Activated T-helper 2 cell treated with anti-CD3 and anti-CD28 coated beads, Interferon-gamma antibody, Interleukin-2, Interleukin-4, amounts not matched to agents 10 μg/mL and 5 μg/mL and 100 μg/mL, durations not matched to agents 14 hours and 24 hours and 36 hours (primary cell): ENCODE measurements at regions of chr5 and their contacts with region 1.

Region 1: DNA sequence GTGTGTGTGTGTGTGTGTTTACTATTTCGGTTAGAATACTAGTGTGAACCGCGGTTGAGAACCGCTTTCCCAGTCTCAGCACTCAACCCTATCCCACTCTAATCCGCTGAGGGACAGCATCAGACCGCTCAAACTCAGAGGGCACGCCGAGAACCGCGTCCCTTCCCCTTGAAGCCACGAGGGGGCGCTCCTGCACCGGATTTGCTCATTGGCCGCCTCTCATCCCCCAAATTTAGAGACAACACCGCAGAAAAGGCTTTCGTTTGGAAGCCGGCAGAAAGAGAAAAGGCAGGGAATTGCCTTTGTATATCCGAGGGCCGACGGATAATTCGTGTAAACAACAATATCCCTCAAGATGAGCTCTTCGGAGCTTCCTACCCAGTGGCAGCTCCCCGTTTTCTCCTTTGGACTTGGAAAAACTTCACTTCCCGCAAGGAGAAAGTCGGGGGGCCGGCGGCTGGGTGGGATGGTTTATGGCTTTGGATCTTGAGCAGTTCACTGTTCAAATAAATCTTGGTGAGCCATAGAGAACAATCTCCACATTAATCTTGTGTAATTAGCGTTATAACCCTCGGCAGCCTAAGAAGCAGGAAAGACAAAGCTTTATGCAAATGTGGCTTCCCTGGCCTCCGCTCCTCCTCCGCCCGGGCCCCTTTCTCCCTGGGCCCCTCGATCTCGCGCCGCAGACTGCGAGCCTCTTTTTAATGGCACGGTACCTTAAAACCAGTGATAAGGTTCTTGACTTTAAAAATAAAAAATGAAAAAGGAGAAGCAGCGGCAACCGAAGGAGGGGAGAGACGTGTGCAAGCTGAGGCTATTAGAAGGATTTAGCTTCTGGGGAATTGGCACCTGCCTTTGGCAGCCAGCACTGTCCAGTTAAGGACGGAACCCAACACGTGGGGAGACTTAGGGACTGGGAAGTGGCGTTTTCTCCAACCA is 296.8 kb downstream of the PARP8 start:
- DNase-seq: peak; percentile 54
- H3K4me3 Mint-ChIP-seq: peak overlapping the region; percentile 77
- H3K27ac Mint-ChIP-seq: no peak overlapping the region
- H3K4me1 Mint-ChIP-seq: peaks cover 30% of the 10 kb centered on the region
- H3K27me3 Mint-ChIP-seq: peaks cover 52% of the 10 kb centered on the region

Region 2: DNA sequence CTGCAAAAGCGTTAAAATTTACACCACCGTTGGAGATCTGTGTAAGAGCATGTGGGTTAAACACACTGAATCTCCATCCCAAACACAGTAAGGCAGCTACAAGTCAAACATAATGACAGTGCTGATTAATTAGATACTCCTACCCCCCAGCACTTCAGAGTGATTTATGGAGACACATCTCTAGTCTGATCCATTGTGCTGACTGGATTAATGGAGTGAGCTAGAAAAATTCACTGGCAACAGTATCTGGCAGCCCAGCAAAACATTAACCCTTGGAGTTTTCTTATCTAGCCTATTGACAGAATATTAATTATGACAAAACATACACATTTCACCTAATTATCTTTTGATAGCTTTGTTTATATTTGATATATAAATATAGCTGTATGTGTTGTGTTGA is 231.5 kb after region 1 on chr5:
- intact Hi-C with region 1: loop called (anchors 10 kb)
- DNase-seq: no peak
- H3K4me3 Mint-ChIP-seq: no peak overlapping the region
- H3K27ac Mint-ChIP-seq: no peak overlapping the region
- H3K4me1 Mint-ChIP-seq: no peaks in the 10 kb centered on the region
- H3K27me3 Mint-ChIP-seq: no peaks in the 10 kb centered on the region

Region 3: GRCh38 chr5:51382763-51383490 is 419.7 kb after region 1 on chr5 and contains the start of gene ISL1:
- intact Hi-C with region 1: loop called (anchors 2 kb)
- DNase-seq: no peak
- H3K4me3 Mint-ChIP-seq: peak within 1 kb of the TSS; percentile 42
- H3K27ac Mint-ChIP-seq: no peak within 1 kb of the TSS
- H3K4me1 Mint-ChIP-seq: peaks cover 7% of the 10 kb centered on the region
- H3K27me3 Mint-ChIP-seq: peaks cover 97% of the 10 kb centered on the region
- total RNA-seq, gene ISL1: not detected in 2 replicates

Region 4: DNA sequence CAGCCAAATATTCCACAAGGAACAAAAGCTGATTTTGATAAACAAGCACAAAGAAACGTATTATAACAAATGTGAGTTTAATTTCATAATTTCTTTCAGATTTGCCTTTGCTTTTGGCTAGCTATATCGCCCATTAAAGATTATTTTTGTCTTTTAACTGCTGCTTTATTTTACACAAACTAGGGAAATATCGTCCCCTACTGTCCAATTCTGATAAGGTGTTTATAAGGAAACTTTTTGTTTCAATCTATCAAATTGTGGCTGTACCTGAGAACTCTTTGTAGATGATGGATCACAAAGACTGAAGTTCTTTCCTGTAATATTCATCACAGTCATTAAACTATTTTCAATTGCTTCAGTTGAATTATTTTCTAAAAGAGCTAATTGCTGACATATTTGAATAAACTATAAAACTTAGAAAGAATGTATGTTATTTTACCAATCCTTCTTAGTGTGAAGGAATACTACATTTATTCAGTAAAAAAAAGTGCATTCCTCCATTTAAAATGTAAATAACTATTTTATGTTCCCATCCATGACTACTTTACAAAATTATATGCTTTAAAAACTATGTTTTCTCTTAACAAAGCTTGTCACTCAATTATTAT is 1393.2 kb after region 1 on chr5:
- intact Hi-C with region 1: loop called (anchors 5 kb)
- DNase-seq: no peak
- H3K4me3 Mint-ChIP-seq: no peak overlapping the region
- H3K27ac Mint-ChIP-seq: no peak overlapping the region
- H3K4me1 Mint-ChIP-seq: no peaks in the 10 kb centered on the region
- H3K27me3 Mint-ChIP-seq: no peaks in the 10 kb centered on the region

Region 5: GRCh38 chr5:52657247-52657645 is 1694.0 kb after region 1 on chr5:
- intact Hi-C with region 1: loop called (anchors 2 kb)
- DNase-seq: no peak
- H3K4me3 Mint-ChIP-seq: no peak overlapping the region
- H3K27ac Mint-ChIP-seq: no peak overlapping the region
- H3K4me1 Mint-ChIP-seq: no peaks in the 10 kb centered on the region
- H3K27me3 Mint-ChIP-seq: peaks cover 29% of the 10 kb centered on the region